AG04450 (cell line): ENCODE measurements at regions of chr1 and their contacts with region 1.

Region 1: DNA sequence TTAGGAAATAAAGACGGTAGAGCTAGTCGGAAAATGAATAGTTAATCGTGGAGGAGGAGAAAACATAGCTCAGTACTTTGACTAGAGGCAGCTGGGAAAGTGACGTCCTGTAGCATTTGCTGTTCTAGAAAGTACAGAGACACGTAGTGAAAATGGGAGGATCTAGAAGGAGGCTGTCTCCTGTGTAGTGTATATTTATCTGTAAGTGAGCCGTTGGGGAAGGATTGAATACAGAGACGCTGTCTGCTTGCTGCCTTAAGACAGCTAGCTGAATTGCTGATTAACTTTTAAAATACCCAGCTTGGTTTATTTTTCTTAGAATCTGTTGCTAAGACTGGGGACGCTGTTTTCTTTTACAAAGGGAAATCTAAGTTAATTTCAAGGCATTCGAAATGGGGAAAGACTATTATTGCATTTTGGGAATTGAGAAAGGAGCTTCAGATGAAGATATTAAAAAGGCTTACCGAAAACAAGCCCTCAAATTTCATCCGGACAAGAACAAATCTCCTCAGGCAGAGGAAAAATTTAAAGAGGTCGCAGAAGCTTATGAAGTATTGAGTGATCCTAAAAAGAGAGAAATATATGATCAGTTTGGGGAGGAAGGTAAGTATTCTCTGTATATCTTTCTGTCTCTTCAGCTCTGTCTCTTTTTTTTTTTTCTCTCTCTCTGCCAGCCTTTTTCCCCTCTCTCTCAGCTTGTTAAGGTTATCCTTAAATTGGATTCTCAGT is at the start of gene DNAJB4:
- DNase-seq: peak; percentile 96
- H3K4me3 ChIP-seq: peak within 1 kb of the TSS; percentile 74
- H3K27ac ChIP-seq: peak within 1 kb of the TSS; percentile 53
- H3K27me3 ChIP-seq: no peaks in the 10 kb centered on the region
- CTCF ChIP-seq: no peak
- polyA plus RNA-seq, gene DNAJB4: 35.1 and 51.6 TPM in 2 replicates

Region 2: DNA sequence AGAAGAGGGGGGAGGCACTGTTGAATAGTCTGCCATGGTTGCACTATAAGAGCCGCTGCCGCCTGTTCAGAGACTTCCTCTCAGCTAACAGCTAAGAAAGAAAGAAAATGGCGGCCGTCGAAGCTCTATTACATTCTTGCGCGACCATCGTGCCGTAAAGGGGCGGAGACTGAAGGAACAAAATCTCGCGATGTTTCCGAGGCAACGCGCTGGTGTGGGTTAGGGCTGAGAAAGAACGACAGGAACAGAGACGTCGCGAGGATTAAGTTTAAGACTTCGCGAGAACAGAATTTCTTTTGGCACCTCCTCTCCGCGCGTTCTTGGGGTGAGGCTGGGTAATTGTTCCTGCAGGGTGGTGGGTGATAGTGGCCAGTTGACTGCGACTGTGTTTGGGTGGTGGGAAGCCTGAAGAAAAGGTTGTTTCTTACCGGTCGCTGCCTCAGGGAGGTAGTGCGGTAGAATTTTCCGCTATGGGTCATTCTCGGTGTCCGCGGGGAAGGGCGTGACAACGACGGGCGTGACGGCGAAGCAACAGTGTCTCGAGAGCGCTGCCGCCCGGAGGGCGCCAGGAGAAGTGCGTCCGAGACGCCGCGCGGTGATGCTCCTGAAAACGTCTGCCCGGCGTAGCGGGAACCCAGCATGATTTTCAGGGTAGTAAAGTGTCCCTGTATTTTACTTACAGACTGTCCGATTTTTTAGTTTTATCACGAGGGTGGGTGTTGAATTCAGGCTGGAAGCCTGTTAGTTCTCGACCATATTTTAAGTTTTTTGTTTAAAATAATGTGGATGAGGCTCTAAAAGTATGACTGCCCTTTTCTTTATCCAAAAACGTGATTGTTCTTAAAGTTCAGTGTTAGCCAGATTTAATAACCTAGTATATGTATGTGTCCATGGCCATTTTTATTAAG is 25.7 kb before region 1 on chr1 and contains the start of gene FUBP1:
- CTCF ChIA-PET with region 1: interaction called, 5 read pairs
- POLR2A ChIA-PET with region 1: interaction called, 105 read pairs
- DNase-seq: peak; percentile 99
- H3K4me3 ChIP-seq: peak within 1 kb of the TSS; percentile 77
- H3K27ac ChIP-seq: peak within 1 kb of the TSS; percentile 97
- H3K27me3 ChIP-seq: no peaks in the 10 kb centered on the region
- CTCF ChIP-seq: peak; percentile 74
- polyA plus RNA-seq, gene FUBP1: 123 and 142 TPM in 2 replicates

Region 3: GRCh38 chr1:78101514-78101913 is 96.6 kb after region 1 on chr1:
- CTCF ChIA-PET with region 1: no interaction called
- POLR2A ChIA-PET with region 1: interaction called, 21 read pairs
- DNase-seq: peak; percentile 86
- H3K4me3 ChIP-seq: no peak overlapping the region
- H3K27ac ChIP-seq: peak overlapping the region; percentile 80
- H3K27me3 ChIP-seq: no peaks in the 10 kb centered on the region
- CTCF ChIP-seq: no peak